Dendritic cell treated with granulocyte-macrophage colony-stimulating factor and Interleukin-4, amounts not matched to agents 40 ng/mL and 50 ng/mL, for 4 days (primary cell): ENCODE measurements at regions of chr6 and their contacts with region 1.

Region 1: GRCh38 chr6:21589352-21590345 is 3.9 kb upstream of the SOX4 start:
- H3K4me3 Mint-ChIP-seq: peak overlapping the region; percentile 94
- H3K27ac Mint-ChIP-seq: peak overlapping the region; percentile 73
- H3K4me1 Mint-ChIP-seq: peaks cover 26% of the 10 kb centered on the region
- H3K27me3 Mint-ChIP-seq: peaks cover 13% of the 10 kb centered on the region

Region 2: DNA sequence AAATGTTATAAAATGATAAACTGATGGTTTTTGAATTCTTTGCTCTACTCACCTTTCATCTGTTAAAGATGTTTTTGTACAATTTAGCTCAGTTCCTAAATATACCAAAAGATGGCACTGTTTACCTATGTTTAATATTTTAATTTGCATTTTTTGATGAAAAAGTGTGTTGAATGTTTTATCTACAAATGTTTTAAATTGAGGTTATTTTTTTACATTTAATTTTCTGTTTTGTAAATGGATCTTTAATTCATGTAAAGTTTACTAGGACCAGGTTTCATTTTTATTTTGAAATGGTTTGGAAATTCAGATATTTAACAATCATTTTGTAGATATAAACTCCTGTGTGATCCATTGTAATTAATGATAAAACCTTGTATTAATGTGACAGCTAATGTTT is 1025.4 kb before region 1 on chr6:
- intact Hi-C with region 1: loop called (anchors 2 kb)
- H3K4me3 Mint-ChIP-seq: no peak overlapping the region
- H3K27ac Mint-ChIP-seq: no peak overlapping the region
- H3K4me1 Mint-ChIP-seq: no peaks in the 10 kb centered on the region
- H3K27me3 Mint-ChIP-seq: no peaks in the 10 kb centered on the region

Region 3: GRCh38 chr6:20877008-20877937 is 712.4 kb before region 1 on chr6:
- intact Hi-C with region 1: loop called (anchors 2 kb)
- H3K4me3 Mint-ChIP-seq: no peak overlapping the region
- H3K27ac Mint-ChIP-seq: peak overlapping the region; percentile 68
- H3K4me1 Mint-ChIP-seq: peaks cover 21% of the 10 kb centered on the region
- H3K27me3 Mint-ChIP-seq: no peaks in the 10 kb centered on the region

Region 4: DNA sequence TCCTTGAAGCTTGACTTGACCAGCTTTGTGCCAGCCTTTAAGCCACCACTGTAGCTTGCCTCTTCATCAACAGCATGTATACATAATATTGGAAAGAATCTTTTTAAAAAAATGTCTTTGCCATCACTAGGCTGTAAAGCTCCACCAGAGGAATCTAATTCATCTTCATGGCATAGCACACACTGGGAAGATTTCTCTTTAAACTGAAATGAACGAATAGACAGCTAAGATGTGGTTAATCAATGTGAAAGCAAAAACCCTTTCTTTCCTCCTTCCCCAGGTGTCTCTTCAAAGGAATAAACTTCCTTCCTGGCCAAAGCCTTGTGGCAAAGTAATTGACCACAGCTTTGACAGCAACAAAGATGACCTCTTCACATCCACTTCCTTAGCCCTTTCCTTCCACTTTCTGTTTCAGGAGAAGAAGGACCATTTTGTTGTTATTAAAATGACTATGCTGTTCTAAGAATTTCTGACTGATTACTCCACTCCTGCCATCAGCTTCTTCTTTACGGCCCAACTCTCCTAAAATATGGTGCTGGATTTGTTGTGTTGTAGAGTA is 424.8 kb before region 1 on chr6:
- intact Hi-C with region 1: loop called (anchors 10 kb)
- H3K4me3 Mint-ChIP-seq: no peak overlapping the region
- H3K27ac Mint-ChIP-seq: no peak overlapping the region
- H3K4me1 Mint-ChIP-seq: peaks cover 14% of the 10 kb centered on the region
- H3K27me3 Mint-ChIP-seq: no peaks in the 10 kb centered on the region

Region 5: GRCh38 chr6:21538186-21538798 is 51.4 kb before region 1 on chr6:
- intact Hi-C with region 1: no loop called
- H3K4me3 Mint-ChIP-seq: no peak overlapping the region
- H3K27ac Mint-ChIP-seq: no peak overlapping the region
- H3K4me1 Mint-ChIP-seq: no peaks in the 10 kb centered on the region
- H3K27me3 Mint-ChIP-seq: no peaks in the 10 kb centered on the region

Region 6: GRCh38 chr6:21935561-21936028 is 345.9 kb after region 1 on chr6:
- intact Hi-C with region 1: loop called (anchors 5 kb)
- H3K4me3 Mint-ChIP-seq: no peak overlapping the region
- H3K27ac Mint-ChIP-seq: no peak overlapping the region
- H3K4me1 Mint-ChIP-seq: no peaks in the 10 kb centered on the region
- H3K27me3 Mint-ChIP-seq: no peaks in the 10 kb centered on the region